Sigmoid colon (tissue), 7 donors: ENCODE measurements at regions of chr2 and their contacts with region 1.

Region 1: GRCh38 chr2:40289771-40290404 is 162.0 kb downstream of the SLC8A1 start:
- DNase-seq: no peak
- H3K4me3 ChIP-seq: no peak overlapping the region
- H3K27ac ChIP-seq: peak overlapping the region in 1 of 4 donors; percentile 7
- H3K4me1 ChIP-seq: peaks cover 0 to 45% (median 22%) of the 10 kb centered on the region in 4 donors
- H3K27me3 ChIP-seq: no peaks in the 10 kb centered on the region
- CTCF ChIP-seq: no peak
- EP300 ChIP-seq: no peak
- POLR2A ChIP-seq: no peak

Region 2: GRCh38 chr2:40332191-40332826 is 42.4 kb after region 1 on chr2:
- intact Hi-C with region 1: no loop called
- DNase-seq: no peak
- H3K4me3 ChIP-seq: no peak overlapping the region
- H3K27ac ChIP-seq: peak overlapping the region; percentile 40 to 80 (median 71)
- H3K4me1 ChIP-seq: peaks cover 0 to 49% (median 42%) of the 10 kb centered on the region in 4 donors
- H3K27me3 ChIP-seq: no peaks in the 10 kb centered on the region
- CTCF ChIP-seq: no peak
- EP300 ChIP-seq: peak in 1 of 4 donors; percentile 31
- POLR2A ChIP-seq: no peak

Region 3: DNA sequence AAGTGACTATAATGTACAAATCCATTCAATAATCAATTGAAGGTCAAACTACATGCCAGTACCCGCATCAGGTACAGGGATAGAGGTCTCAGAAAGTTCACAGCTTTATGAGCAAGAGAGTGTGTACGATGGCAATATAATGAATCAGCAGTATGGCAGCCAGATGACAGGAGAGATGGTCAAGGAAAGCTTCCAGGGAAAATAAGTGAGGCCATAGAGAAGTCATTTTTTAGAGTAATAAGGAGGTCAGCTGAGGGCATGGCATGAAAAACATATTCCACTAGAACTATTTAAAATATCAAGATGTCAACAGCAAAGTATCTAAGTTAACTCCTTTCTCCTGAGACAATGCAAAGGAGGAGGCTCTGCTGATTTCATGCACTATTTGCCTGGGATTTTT is 54.0 kb after region 1 on chr2:
- intact Hi-C with region 1: loop called (anchors 2 kb)
- DNase-seq: no peak
- H3K4me3 ChIP-seq: no peak overlapping the region
- H3K27ac ChIP-seq: peak overlapping the region in 3 of 4 donors; percentile 21 to 85 (median 76)
- H3K4me1 ChIP-seq: peaks cover 0 to 67% (median 50%) of the 10 kb centered on the region in 4 donors
- H3K27me3 ChIP-seq: no peaks in the 10 kb centered on the region
- CTCF ChIP-seq: no peak
- EP300 ChIP-seq: no peak
- POLR2A ChIP-seq: no peak